GM10248 (cell line): ENCODE measurements at regions of chr1 and their contacts with region 1.

Region 1: GRCh38 chr1:203486618-203487370 is 7.2 kb upstream of the OPTC start:
- DNase-seq: no peak
- CTCF ChIP-seq: no peak

Region 2: DNA sequence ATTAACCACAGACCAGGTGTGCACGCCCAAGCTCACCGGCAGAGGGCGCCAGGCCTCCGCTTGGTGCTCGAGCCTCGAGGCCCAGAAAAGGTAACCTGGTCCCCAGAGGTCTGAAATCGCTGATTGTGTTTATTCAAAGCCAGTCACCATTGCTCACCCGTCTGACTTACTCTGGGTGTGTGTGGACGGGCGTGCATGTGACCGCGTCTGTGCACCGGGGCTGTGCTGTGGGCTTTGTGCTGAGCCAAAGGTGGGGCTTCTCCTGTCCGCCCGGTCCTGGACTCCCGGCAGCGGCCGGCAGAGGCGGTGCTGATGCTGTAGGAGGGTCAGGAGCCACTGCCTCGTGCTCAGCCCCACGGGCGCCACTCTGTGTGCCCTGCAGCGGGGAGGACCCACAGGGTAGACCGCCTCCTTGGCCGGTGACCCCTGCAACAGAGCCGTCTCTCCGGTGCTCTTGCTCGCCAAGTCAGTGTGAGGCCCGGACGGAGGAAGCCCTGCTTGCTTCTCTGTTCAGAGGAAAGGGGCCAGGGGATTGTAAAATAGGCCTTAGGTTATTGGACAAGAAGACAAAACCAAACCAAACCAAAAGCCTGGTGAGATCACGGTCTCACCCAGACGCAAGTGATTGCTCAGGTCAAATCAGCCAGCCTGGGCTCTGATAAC is 213.5 kb before region 1 on chr1:
- CTCF ChIA-PET with region 1: interaction called, 116 read pairs
- POLR2A ChIA-PET with region 1: no interaction called
- DNase-seq: peak; percentile 76
- CTCF ChIP-seq: peak; percentile 99

Region 3: DNA sequence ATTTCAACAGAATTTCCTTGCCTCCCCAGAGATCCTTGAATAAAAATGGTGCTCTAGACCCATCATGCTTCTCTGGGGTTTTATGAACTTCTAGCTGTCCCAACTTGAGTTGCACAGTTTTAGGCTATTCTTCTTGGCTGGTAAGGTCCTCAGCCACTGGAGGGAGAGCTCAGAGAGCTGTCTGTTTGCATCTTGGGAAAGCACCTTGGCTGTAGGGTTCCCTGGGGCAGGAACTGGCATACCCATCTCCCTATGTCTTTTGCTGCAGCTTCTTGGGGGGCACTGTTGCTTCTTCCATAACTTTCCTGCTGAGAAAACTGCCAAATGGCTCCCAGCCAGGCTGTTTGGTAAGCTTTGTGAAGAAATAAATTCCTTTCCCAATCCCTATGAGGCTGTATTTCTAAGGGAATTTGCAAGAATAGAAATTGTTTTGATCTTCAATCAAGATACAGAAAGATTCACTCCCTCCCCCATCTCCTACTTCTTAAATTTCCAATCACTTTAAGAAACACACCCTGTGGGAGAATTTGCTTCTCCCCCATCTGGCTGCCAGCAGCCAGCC is 127.7 kb before region 1 on chr1:
- CTCF ChIA-PET with region 1: interaction called, 18 read pairs
- POLR2A ChIA-PET with region 1: no interaction called
- DNase-seq: no peak
- CTCF ChIP-seq: no peak

Region 4: DNA sequence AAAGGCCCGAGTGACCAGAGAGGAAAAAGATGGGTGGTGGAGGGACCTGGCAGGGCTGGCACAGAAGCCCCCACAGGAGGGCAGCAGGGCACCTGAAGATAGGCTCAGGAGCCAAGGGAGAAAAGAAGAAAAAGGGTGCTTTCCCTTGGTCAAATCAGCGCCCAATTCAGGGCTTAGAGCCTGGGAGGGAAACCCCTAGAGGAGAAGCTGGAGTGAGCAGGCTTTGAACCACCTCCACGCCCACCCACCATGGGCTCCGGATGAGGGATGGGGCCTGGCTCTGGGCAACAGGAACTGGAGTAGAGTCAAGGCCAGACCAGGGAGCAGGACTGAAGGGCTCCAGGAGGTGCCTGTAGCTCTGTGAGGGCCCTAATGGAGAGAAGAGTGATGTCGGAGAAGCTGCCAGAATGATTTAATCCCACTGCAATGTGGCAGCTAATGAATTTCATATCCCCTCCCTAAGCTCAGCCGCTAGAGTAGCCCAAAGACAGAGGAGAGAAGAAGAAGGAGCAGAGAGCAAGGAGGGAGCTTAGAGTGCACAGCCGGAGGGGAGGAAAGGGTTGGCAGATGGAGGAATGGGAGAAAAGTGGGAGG is 23.2 kb before region 1 on chr1:
- CTCF ChIA-PET with region 1: interaction called, 39 read pairs
- POLR2A ChIA-PET with region 1: no interaction called
- DNase-seq: no peak
- CTCF ChIP-seq: no peak

Region 5: DNA sequence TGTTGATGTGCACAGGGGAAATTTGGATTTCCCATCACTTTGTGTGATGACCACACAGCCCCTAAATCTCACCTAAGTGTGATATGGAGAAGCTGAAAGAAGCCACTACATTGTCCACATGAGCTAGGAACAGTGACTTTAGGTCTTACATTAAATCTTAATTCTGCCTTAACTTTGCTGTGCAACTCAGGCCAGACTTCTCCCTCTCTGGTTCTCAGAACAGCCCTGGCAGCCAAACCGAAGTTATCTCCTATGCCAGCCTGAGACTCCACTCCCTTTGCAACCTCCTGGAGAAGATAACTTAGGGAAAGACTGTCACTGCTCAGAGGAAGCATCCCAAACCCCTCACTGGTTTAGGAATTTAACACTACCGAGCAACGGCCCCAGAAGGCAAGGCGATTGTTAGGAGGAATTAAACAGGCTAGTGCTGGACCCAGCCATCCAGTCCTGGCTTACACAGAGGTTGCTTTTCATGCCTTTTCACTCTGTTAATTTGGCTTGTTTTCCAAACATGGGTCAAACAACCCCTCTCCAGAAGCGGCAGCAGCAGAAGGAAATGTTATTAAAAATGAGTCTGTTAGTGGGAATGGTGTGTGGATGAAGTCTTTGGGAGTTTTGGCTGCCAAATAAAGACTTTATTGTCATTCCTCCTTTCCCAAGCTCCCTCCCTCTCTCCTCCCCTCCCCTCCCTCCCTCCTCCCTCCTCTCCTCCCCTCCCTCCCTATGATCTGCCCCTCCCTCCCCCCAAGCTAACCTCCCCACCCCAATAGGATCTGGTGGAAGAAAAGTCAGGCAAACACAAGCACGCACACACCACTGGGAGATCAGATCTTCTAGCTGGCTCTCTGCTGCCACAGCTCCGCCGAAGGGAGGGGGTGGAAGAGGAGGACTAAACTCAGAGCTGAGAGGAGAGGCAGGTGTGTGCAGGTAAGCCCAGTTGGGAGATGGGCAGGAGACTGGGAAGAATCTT is 11.5 kb before region 1 on chr1 and contains the start of gene PRELP:
- CTCF ChIA-PET with region 1: interaction called, 75 read pairs
- POLR2A ChIA-PET with region 1: no interaction called
- DNase-seq: no peak
- CTCF ChIP-seq: no peak

Region 6: GRCh38 chr1:203558064-203558760 is 71.4 kb after region 1 on chr1:
- CTCF ChIA-PET with region 1: no interaction called
- POLR2A ChIA-PET with region 1: no interaction called
- DNase-seq: no peak
- CTCF ChIP-seq: no peak

Region 7: GRCh38 chr1:203600782-203601736 is 114.3 kb after region 1 on chr1:
- CTCF ChIA-PET with region 1: no interaction called
- POLR2A ChIA-PET with region 1: no interaction called
- DNase-seq: no peak
- CTCF ChIP-seq: no peak

Region 8: GRCh38 chr1:203702130-203702577 is 215.4 kb after region 1 on chr1:
- CTCF ChIA-PET with region 1: interaction called, 10 read pairs
- POLR2A ChIA-PET with region 1: no interaction called
- DNase-seq: peak; percentile 56
- CTCF ChIP-seq: peak; percentile 77